Panc1 (cell line): ENCODE measurements at regions of chr17 and their contacts with region 1.

Region 1: GRCh38 chr17:29124117-29124924 is 55.9 kb downstream of the MYO18A start:
- DNase-seq: no peak
- ATAC-seq: peak; percentile 90
- H3K4me3 ChIP-seq: no peak overlapping the region
- H3K27ac ChIP-seq: no peak overlapping the region
- H3K4me1 ChIP-seq: peaks cover 8% of the 10 kb centered on the region
- H3K27me3 ChIP-seq: no peaks in the 10 kb centered on the region
- CTCF ChIP-seq: no peak; the same call in 1 of the 2 replicates

Region 2: GRCh38 chr17:29107069-29107468 is 17.3 kb before region 1 on chr17:
- CTCF ChIA-PET with region 1: no interaction called
- POLR2A ChIA-PET with region 1: no interaction called
- in situ Hi-C with region 1: no loop called
- intact Hi-C with region 1: no loop called
- DNase-seq: no peak
- ATAC-seq: no peak
- H3K4me3 ChIP-seq: no peak overlapping the region
- H3K27ac ChIP-seq: no peak overlapping the region
- H3K4me1 ChIP-seq: peaks cover 12% of the 10 kb centered on the region
- H3K27me3 ChIP-seq: no peaks in the 10 kb centered on the region
- CTCF ChIP-seq: no peak

Region 3: GRCh38 chr17:29143894-29144293 is 19.6 kb after region 1 on chr17:
- CTCF ChIA-PET with region 1: interaction called, 25 read pairs
- POLR2A ChIA-PET with region 1: interaction called, 3 read pairs
- in situ Hi-C with region 1: no loop called
- intact Hi-C with region 1: no loop called
- DNase-seq: no peak
- ATAC-seq: no peak
- H3K4me3 ChIP-seq: no peak overlapping the region
- H3K27ac ChIP-seq: no peak overlapping the region
- H3K4me1 ChIP-seq: peaks cover 57% of the 10 kb centered on the region
- H3K27me3 ChIP-seq: no peaks in the 10 kb centered on the region
- CTCF ChIP-seq: no peak

Region 4: GRCh38 chr17:29148790-29149430 is 24.6 kb after region 1 on chr17:
- CTCF ChIA-PET with region 1: interaction called, 25 read pairs
- POLR2A ChIA-PET with region 1: interaction called, 3 read pairs
- in situ Hi-C with region 1: no loop called
- intact Hi-C with region 1: no loop called
- DNase-seq: peak; percentile 63
- ATAC-seq: peak; percentile 90
- H3K4me3 ChIP-seq: peak overlapping the region; percentile 39 to 53
- H3K27ac ChIP-seq: peak overlapping the region; percentile 97
- H3K4me1 ChIP-seq: peaks cover 82% of the 10 kb centered on the region
- H3K27me3 ChIP-seq: no peaks in the 10 kb centered on the region
- CTCF ChIP-seq: peak; percentile 97

Region 5: GRCh38 chr17:29219378-29220047 is 95.2 kb after region 1 on chr17:
- CTCF ChIA-PET with region 1: interaction called, 15 read pairs
- POLR2A ChIA-PET with region 1: no interaction called
- in situ Hi-C with region 1: no loop called
- intact Hi-C with region 1: no loop called
- DNase-seq: peak; percentile 41
- ATAC-seq: peak; percentile 95
- H3K4me3 ChIP-seq: peak overlapping the region in 1 of 2 experiments; percentile 24; a peak in 2 of 4 replicates
- H3K27ac ChIP-seq: peak overlapping the region; percentile 58; the same call in 1 of the 2 replicates
- H3K4me1 ChIP-seq: peaks cover 6% of the 10 kb centered on the region
- H3K27me3 ChIP-seq: no peaks in the 10 kb centered on the region
- CTCF ChIP-seq: peak; percentile 94

Region 6: GRCh38 chr17:29283271-29283895 is 159.1 kb after region 1 on chr17:
- CTCF ChIA-PET with region 1: no interaction called
- POLR2A ChIA-PET with region 1: no interaction called
- in situ Hi-C with region 1: no loop called
- intact Hi-C with region 1: no loop called
- DNase-seq: no peak
- ATAC-seq: no peak; the same call in 1 of the 2 replicates
- H3K4me3 ChIP-seq: no peak overlapping the region
- H3K27ac ChIP-seq: no peak overlapping the region
- H3K4me1 ChIP-seq: peaks cover 16% of the 10 kb centered on the region; the same call in 1 of the 2 replicates
- H3K27me3 ChIP-seq: no peaks in the 10 kb centered on the region
- CTCF ChIP-seq: no peak

Region 7: DNA sequence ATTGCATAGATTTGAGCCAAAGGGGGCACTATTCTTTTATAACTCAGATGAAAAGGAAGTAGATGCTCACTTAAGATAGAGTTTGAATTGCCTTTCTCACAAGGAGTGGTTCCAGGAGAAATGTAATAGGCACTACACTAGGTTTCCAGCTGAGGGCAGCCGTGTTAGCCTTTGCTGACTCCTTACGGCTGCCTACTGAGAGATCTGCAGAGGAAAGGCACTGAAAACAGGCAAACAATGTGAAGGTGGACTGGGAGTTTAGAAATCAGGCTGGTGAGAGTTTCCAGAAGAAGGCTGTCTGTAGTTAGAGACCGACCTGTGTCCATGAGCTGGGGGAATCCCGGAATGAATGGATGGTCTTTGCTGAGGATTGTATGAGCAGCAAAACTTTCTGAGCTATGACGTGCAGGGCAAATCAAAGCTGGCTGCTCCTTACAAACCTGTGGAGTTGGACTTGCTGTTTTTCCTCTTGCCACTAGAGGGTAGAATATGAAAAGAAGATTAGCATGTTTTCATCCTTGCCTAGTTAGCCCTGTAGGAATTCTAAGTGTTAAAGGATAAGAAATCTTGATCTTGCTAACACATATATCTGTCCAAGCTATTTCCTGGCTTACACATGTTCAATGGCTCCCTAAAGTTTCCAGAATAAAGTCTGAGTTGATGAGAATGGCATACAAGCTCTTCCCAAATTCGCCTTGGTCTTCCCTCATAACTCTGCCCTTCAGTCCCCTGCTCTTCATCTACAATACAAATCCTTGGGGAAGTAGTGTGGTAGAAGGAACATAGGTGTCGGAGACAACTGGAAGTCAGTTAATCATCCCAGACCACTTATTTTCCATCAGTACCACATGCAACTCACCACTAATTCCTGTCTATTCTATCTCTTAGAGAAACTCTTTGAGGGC is 245.8 kb after region 1 on chr17:
- CTCF ChIA-PET with region 1: interaction called, 10 read pairs
- POLR2A ChIA-PET with region 1: no interaction called
- in situ Hi-C with region 1: no loop called
- intact Hi-C with region 1: no loop called
- DNase-seq: peak; percentile 83
- ATAC-seq: peak; percentile 99
- H3K4me3 ChIP-seq: peak overlapping the region; percentile 4 to 42; a peak in 3 of 4 replicates
- H3K27ac ChIP-seq: no peak overlapping the region
- H3K4me1 ChIP-seq: 0 out of 2 replicates have a peak, but pooled peaks cover 5% of the 10 kb centered on the region
- H3K27me3 ChIP-seq: no peaks in the 10 kb centered on the region
- CTCF ChIP-seq: peak; percentile 88